ENCODE measurements at regions of chr11 and their contacts with region 1.

Region 1: GRCh38 chr11:117107701-117108590 is 9.7 kb upstream of the SIK3 start:
- DNase-seq: no peak
- H3K4me3 Mint-ChIP-seq: no peak overlapping the region
- H3K27ac Mint-ChIP-seq: no peak overlapping the region
- H3K4me1 Mint-ChIP-seq: no peaks in the 10 kb centered on the region
- H3K27me3 Mint-ChIP-seq: no peaks in the 10 kb centered on the region

Region 2: DNA sequence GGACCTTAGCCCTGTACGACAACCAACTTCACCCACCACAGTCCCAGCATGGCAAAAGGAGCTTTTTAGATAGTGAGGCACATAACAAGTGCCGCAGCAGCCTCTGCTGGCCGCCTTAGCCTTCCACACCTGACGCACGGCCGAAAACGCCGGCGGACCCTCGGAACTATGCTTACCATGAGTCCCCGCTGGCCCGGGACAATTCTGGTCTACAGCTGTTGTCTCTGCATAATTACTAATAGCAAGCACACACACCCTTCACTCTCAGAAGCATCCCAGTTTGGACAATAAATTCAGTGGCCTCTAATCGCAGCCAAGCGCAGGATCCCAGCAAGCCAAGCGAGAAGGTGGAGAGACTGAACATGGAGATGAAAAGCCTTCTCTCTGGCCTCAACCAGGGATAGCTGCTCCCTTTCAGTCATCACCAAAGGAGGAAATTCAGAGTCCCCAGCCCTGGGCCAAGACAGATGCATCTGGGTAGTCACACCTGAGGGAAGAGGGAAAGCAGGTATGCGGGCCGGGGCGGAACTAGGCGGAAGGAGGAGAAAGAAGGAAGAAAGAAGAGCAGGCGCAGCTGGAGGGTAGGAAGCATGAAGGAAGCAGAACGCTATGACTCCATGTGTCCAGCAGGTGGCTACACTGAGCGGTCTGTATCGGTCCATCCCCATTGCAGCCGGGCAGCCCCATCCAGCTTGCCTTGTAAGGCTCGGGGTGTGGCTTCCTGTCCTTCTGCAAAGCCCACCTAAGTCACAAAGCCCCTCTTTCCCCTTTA is 375.5 kb before region 1 on chr11:
- CTCF ChIA-PET with region 1: interaction called, 35 read pairs
- POLR2A ChIA-PET with region 1: interaction called, 3 read pairs
- intact Hi-C with region 1: loop called (anchors 1 kb)
- DNase-seq: peak; percentile 73
- H3K4me3 Mint-ChIP-seq: no peak overlapping the region
- H3K27ac Mint-ChIP-seq: no peak overlapping the region
- H3K4me1 Mint-ChIP-seq: peaks cover 10% of the 10 kb centered on the region
- H3K27me3 Mint-ChIP-seq: no peaks in the 10 kb centered on the region

Region 3: DNA sequence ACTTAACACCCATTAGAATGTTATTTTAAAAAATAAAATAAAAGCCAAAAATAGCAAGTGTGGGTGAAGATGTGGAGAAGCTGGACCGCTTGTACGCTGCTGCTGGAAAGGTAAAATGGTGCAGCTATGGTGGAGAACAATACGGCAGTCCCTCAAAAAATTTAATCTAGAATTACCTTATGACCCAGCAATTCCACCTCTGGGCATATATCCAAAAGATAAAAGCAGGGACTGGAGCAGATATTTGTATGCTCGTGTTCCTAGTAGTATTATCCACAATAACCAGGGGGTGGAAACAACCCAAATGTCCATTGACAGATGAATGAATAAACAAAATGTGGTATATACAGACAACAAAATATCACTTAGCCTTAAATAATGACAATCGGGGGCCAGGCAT is 310.1 kb before region 1 on chr11:
- CTCF ChIA-PET with region 1: interaction called, 147 read pairs
- POLR2A ChIA-PET with region 1: no interaction called
- intact Hi-C with region 1: no loop called
- DNase-seq: no peak
- H3K4me3 Mint-ChIP-seq: no peak overlapping the region
- H3K27ac Mint-ChIP-seq: no peak overlapping the region
- H3K4me1 Mint-ChIP-seq: peaks cover 4% of the 10 kb centered on the region
- H3K27me3 Mint-ChIP-seq: peaks cover 12% of the 10 kb centered on the region

Region 4: DNA sequence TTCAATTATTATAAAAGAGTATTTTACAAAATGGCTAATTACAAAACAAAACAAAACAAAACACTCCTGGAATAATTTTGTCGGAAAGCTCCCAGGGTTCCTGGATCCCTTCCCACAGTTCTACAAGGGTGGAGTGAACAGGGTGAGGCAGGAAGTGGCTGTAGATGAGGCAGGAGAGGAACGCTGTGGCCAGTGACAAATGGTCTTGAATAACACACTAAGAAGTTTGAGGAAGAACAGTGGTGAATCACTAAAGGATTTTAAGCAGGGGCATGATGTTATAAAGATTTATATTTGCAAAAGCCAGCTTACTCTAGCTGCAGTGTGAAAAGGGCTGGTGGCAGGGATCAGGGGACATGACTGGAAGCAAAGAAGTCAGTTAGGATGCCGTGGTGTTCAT is 236.7 kb before region 1 on chr11:
- CTCF ChIA-PET with region 1: interaction called, 13 read pairs
- POLR2A ChIA-PET with region 1: no interaction called
- intact Hi-C with region 1: no loop called
- DNase-seq: no peak
- H3K4me3 Mint-ChIP-seq: no peak overlapping the region
- H3K27ac Mint-ChIP-seq: peak overlapping the region; percentile 5
- H3K4me1 Mint-ChIP-seq: peaks cover 7% of the 10 kb centered on the region
- H3K27me3 Mint-ChIP-seq: no peaks in the 10 kb centered on the region

Region 5: DNA sequence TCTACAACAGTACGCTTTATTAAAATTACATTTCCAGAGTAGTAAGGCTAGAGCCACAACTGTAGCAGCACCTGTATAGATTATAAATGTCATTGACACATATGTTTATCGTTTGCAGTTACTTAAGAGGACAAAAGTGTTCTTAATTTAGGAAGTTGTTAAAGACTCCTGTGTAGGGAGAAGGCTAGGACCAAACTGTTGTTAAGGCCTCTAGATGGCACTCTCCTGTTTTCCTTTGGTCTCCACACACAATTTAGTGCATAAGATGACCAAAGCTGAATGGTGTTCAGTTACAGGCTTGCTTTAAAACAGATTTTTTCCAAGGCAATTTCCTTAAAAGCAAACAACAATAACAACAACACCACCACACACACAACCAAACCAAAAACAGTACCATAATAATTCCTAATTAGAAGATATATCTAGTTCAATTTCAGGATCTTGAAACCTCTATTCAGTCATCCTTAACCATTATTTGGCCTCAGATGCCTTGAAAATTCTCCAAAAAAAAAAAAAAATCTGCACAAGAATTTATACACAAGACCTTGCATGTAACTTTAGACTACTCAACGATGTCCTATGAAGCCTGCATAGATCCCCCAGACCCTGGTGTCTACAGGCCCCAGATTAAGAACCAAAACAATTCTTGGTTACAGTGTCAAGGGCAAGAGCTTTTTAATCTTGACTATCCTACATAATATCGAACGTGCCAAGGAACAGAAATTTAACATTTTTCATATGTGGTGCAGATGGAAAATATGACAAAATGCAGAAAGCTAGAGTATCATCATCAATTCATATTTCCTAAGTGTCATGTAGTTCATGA is 227.9 kb before region 1 on chr11:
- CTCF ChIA-PET with region 1: interaction called, 81 read pairs
- POLR2A ChIA-PET with region 1: no interaction called
- intact Hi-C with region 1: loop called (anchors 1 kb)
- DNase-seq: no peak
- H3K4me3 Mint-ChIP-seq: no peak overlapping the region
- H3K27ac Mint-ChIP-seq: no peak overlapping the region
- H3K4me1 Mint-ChIP-seq: peaks cover 28% of the 10 kb centered on the region
- H3K27me3 Mint-ChIP-seq: no peaks in the 10 kb centered on the region

Region 6: GRCh38 chr11:116918925-116919655 is 188.9 kb before region 1 on chr11:
- CTCF ChIA-PET with region 1: interaction called, 11 read pairs
- POLR2A ChIA-PET with region 1: no interaction called
- intact Hi-C with region 1: no loop called
- DNase-seq: no peak
- H3K4me3 Mint-ChIP-seq: no peak overlapping the region
- H3K27ac Mint-ChIP-seq: no peak overlapping the region
- H3K4me1 Mint-ChIP-seq: peaks cover 13% of the 10 kb centered on the region
- H3K27me3 Mint-ChIP-seq: no peaks in the 10 kb centered on the region

Region 7: GRCh38 chr11:117010808-117011540 is 97.0 kb before region 1 on chr11:
- CTCF ChIA-PET with region 1: no interaction called
- POLR2A ChIA-PET with region 1: no interaction called
- intact Hi-C with region 1: no loop called
- DNase-seq: no peak
- H3K4me3 Mint-ChIP-seq: no peak overlapping the region
- H3K27ac Mint-ChIP-seq: peak overlapping the region; percentile 84
- H3K4me1 Mint-ChIP-seq: peaks cover 51% of the 10 kb centered on the region
- H3K27me3 Mint-ChIP-seq: no peaks in the 10 kb centered on the region

Region 8: GRCh38 chr11:117083011-117083935 is 24.7 kb before region 1 on chr11:
- CTCF ChIA-PET with region 1: no interaction called
- POLR2A ChIA-PET with region 1: no interaction called
- intact Hi-C with region 1: no loop called
- DNase-seq: no peak
- H3K4me3 Mint-ChIP-seq: no peak overlapping the region
- H3K27ac Mint-ChIP-seq: no peak overlapping the region
- H3K4me1 Mint-ChIP-seq: peaks cover 52% of the 10 kb centered on the region
- H3K27me3 Mint-ChIP-seq: no peaks in the 10 kb centered on the region

Region 9: DNA sequence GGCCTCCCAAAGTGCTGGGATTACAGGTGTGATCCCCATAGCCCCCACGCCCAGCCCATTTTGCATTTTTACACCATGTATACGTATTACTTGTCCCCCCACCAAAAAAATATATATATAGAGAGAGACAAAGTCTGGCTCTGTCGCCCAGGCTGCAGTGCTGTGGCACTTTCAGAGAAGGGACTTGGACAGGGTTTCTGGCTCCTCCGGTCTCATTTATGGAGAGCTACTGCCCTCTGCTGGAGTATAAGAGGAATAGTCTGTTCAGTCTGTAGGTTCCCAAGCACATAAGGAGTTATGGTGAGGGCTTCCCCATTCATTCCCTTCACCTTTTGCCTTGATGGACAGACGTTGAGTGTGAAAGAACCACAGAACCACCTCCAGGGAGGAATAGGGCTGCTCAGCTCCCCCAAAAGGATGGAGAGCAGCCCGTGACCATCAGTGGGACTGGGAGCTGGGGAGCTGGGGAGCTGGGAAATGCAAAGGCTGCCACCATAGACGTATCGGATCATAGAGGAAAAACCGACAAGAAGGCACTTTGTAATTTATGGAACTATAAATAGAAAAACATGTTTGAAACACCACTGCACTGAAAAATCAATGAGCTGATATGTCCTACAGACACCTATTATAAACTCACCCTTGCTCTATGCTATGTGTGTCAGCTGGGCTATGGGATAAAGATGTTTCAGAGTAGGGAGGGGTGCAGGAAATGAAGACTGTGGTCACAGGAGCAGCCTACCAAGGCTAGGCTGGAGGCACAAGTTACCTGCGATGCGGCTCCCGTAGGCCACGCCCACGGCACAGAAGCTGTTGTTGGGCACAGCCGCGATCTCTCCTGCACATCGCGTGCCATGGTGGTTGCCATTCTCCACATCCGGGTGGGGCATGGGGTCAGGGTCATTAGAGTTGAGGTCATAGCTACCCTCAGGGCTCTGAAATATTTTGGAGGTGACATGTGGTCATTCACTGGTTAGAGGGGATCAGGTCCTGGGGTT is 118.7 kb after region 1 on chr11:
- CTCF ChIA-PET with region 1: interaction called, 16 read pairs
- POLR2A ChIA-PET with region 1: no interaction called
- intact Hi-C with region 1: no loop called
- DNase-seq: peak; percentile 45
- H3K4me3 Mint-ChIP-seq: no peak overlapping the region
- H3K27ac Mint-ChIP-seq: peak overlapping the region; percentile 33
- H3K4me1 Mint-ChIP-seq: peaks cover 29% of the 10 kb centered on the region
- H3K27me3 Mint-ChIP-seq: no peaks in the 10 kb centered on the region

Measured in activated CD4-positive, alpha-beta memory T cell treated with anti-CD3 and anti-CD28 coated beads for 36 hours (primary cell).